ENCODE measurements at regions of chr14 and their contacts with region 1.

Region 1: GRCh38 chr14:24299255-24300195 is at the starts of genes DHRS1 and NOP9:
- DNase-seq: peak; percentile 94
- ATAC-seq: peak; percentile 83
- H3K4me3 Mint-ChIP-seq: peak within 1 kb of the TSS; percentile 91
- H3K27ac Mint-ChIP-seq: peak within 1 kb of the TSS; percentile 89
- H3K4me1 Mint-ChIP-seq: peaks cover 19% of the 10 kb centered on the region
- H3K27me3 Mint-ChIP-seq: 0 out of 2 replicates have a peak, but pooled peaks cover 3% of the 10 kb centered on the region
- CTCF ChIP-seq: no peak
- total RNA-seq, gene DHRS1: 13.9 to 16.7 TPM (median 15.4 TPM) in 3 replicates
- total RNA-seq, gene NOP9: 34.3 to 44.4 TPM (median 35.0 TPM) in 3 replicates

Region 2: DNA sequence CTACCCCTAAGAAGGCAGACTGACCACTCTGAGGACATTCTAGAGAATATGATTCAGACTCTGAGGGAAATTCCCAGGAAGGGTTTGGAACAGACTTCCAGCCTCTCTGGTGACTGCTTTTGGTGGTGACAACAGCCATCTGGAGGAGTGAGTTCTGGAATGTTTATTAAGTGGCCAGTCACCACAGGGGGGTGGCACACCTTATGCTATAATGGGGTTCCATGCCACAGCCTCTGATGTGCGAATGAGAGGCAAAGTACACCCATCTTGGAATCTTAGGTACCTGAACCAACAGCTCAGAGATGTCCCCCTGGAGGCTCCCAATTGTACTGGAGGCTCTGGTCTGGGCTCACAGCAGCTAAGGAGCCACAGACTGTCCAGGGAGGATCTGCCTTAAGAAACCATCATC is 47.6 kb before region 1 on chr14:
- CTCF ChIA-PET with region 1: interaction called, 15 read pairs
- POLR2A ChIA-PET with region 1: no interaction called
- DNase-seq: no peak
- ATAC-seq: peak; percentile 65
- H3K4me3 Mint-ChIP-seq: no peak overlapping the region
- H3K27ac Mint-ChIP-seq: no peak overlapping the region
- H3K4me1 Mint-ChIP-seq: no peaks in the 10 kb centered on the region
- H3K27me3 Mint-ChIP-seq: peaks cover 11% of the 10 kb centered on the region
- CTCF ChIP-seq: no peak

Region 3: DNA sequence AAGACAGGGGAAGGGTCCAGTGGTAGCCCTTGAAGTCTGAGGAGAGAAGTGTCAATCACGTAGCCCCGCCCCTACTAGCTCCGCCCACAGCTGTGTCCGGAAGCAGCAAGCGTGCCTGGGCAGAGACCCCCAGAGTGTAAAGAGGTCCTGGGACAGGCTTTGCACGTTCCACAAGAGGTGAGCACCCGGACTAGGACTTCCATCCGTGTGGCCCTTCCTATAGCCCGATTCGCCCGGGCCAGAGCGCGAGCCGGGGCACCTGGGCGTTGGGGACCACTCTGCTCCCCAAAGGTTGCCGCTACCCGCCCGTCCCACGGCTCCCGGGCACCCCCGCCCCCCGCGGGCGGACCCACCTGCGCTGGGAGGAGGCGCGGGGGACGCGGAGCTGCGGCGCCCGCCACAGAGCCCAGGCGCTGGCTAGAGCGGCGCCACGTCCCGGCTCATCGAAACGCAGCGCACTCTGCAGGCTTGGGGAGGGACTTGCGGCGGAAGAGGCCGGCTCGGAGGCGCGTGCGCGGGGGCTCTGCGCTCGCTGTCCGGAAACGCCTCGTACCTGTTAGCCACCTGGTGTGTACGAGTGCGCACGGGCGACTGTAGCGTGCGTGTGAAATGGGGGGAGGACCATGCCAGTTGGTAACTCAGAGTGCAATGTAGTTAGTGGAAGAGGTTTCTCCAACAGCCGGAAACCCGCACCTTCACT is 28.2 kb before region 1 on chr14 and contains the start of gene RABGGTA:
- CTCF ChIA-PET with region 1: interaction called, 40 read pairs
- POLR2A ChIA-PET with region 1: interaction called, 13 read pairs
- DNase-seq: peak; percentile 95
- ATAC-seq: peak; percentile 94
- H3K4me3 Mint-ChIP-seq: peak within 1 kb of the TSS; percentile 72
- H3K27ac Mint-ChIP-seq: peak within 1 kb of the TSS; percentile 87
- H3K4me1 Mint-ChIP-seq: peaks cover 16% of the 10 kb centered on the region
- H3K27me3 Mint-ChIP-seq: no peaks in the 10 kb centered on the region
- CTCF ChIP-seq: 0 out of 2 replicates have a peak, but pooled peaks have one; percentile 15
- total RNA-seq, gene RABGGTA: 22.3 to 28.1 TPM (median 27.1 TPM) in 3 replicates

Region 4: DNA sequence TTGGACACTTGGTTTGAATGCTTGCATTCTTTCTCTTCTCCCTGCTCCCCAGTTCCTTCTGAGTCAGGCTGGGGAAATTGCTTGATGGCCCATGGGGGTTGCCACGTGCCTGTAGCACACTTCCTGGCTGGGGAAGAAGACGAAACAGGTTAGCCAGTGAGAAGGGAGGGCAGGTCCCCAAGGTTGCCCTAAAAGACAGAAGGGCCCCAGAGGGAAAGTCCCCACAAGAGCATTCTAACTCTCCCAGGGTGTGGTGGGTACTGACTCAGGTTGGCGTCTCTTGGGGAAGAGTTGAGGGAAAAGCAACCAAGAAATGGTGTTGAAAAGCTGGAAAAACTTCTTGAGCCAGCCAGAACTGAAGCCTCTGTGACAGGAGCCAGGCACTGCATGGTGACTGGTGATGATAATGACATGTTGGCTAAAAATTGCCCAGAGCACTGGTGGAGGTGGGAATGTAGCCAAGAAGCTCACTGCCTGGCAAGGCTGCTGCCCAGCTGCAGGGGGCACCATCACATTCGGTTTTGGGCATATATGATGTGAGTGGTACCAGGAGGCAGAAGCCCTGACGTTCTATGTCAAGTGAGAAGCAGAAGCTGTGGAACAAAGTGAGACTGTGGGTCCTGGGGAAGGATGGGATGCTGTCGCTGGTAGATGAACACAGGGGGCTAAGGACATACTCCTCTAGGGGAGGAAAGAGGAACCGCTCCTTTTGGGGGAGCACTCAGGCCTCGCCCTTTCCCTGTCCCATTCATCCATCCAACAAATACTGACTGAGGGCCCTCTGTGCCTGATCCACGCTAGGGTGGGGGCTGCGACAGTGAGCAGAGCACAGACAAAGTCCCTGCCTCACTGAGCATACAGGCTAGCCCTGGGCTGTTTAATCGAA is 20.0 kb before region 1 on chr14:
- CTCF ChIA-PET with region 1: interaction called, 22 read pairs
- POLR2A ChIA-PET with region 1: no interaction called
- DNase-seq: no peak
- ATAC-seq: no peak
- H3K4me3 Mint-ChIP-seq: no peak overlapping the region
- H3K27ac Mint-ChIP-seq: no peak overlapping the region
- H3K4me1 Mint-ChIP-seq: no peaks in the 10 kb centered on the region
- H3K27me3 Mint-ChIP-seq: no peaks in the 10 kb centered on the region
- CTCF ChIP-seq: no peak

Region 5: GRCh38 chr14:24411443-24412389 is 112.2 kb after region 1 on chr14:
- CTCF ChIA-PET with region 1: no interaction called
- POLR2A ChIA-PET with region 1: no interaction called
- DNase-seq: peak; percentile 56
- ATAC-seq: peak; percentile 81
- H3K4me3 Mint-ChIP-seq: no peak overlapping the region
- H3K27ac Mint-ChIP-seq: no peak overlapping the region
- H3K4me1 Mint-ChIP-seq: no peaks in the 10 kb centered on the region
- H3K27me3 Mint-ChIP-seq: no peaks in the 10 kb centered on the region
- CTCF ChIP-seq: peak; percentile 68

Region 6: DNA sequence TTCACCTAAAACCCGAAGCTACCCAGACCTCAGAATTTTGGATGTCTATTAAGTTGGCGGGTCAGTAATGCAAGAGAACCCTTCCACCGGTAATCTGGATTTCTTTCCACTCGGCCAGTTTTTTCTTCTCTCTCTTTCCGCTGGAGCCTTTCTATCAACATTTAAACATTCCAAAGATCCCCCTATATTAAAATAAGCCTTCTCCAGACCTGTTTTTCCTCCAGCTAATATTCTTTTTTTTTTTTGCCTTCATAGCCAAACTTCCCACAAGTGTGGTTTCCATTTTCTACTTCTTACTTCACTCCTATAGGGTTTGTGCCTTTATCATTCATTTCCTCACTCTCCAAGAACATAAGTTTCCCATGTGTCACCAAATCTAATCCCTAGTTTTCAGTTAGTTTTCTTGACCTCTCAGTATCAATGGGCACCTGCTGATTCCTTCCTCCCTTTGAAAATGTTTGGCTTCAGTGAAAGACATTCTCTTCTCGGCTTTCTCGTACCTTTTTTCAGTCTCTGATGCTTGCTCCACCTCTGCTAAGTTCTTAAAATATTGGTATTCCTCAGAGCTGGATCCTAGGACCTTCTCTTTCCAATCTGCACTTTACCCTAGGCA is 143.6 kb after region 1 on chr14:
- CTCF ChIA-PET with region 1: no interaction called
- POLR2A ChIA-PET with region 1: no interaction called
- DNase-seq: no peak
- ATAC-seq: no peak
- H3K4me3 Mint-ChIP-seq: peak overlapping the region; percentile 88
- H3K27ac Mint-ChIP-seq: peak overlapping the region; percentile 99
- H3K4me1 Mint-ChIP-seq: peaks cover 10% of the 10 kb centered on the region
- H3K27me3 Mint-ChIP-seq: no peaks in the 10 kb centered on the region
- CTCF ChIP-seq: no peak

Region 7: DNA sequence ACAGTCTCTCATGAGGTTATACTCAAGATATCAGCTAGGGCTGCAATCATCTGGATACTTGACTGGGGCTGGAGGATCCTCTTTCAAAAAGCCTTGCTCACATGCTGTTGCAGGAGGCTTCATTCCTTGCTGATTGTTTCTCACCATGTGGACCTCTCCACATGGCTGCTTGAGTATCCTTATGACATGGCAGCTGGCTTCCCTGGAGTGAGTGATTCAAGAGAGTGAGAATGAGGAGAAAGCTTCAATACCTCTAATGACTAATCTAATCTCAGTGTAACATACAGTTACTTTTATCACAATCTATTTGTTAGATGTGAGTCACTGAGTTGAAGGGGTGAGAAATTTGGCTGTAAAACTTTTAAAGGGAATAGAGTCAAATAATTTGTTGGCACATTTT is 157.5 kb after region 1 on chr14:
- CTCF ChIA-PET with region 1: no interaction called
- POLR2A ChIA-PET with region 1: no interaction called
- DNase-seq: no peak
- ATAC-seq: no peak
- H3K4me3 Mint-ChIP-seq: no peak overlapping the region
- H3K27ac Mint-ChIP-seq: no peak overlapping the region
- H3K4me1 Mint-ChIP-seq: no peaks in the 10 kb centered on the region
- H3K27me3 Mint-ChIP-seq: peaks cover 10% of the 10 kb centered on the region
- CTCF ChIP-seq: no peak

Region 8: GRCh38 chr14:24518851-24519250 is 219.3 kb after region 1 on chr14:
- CTCF ChIA-PET with region 1: no interaction called
- POLR2A ChIA-PET with region 1: no interaction called
- DNase-seq: no peak
- ATAC-seq: no peak
- H3K4me3 Mint-ChIP-seq: no peak overlapping the region
- H3K27ac Mint-ChIP-seq: no peak overlapping the region
- H3K4me1 Mint-ChIP-seq: no peaks in the 10 kb centered on the region
- H3K27me3 Mint-ChIP-seq: peaks cover 32% of the 10 kb centered on the region
- CTCF ChIP-seq: no peak